ENCODE measurements at regions of chr2 and their contacts with region 1.

Region 1: DNA sequence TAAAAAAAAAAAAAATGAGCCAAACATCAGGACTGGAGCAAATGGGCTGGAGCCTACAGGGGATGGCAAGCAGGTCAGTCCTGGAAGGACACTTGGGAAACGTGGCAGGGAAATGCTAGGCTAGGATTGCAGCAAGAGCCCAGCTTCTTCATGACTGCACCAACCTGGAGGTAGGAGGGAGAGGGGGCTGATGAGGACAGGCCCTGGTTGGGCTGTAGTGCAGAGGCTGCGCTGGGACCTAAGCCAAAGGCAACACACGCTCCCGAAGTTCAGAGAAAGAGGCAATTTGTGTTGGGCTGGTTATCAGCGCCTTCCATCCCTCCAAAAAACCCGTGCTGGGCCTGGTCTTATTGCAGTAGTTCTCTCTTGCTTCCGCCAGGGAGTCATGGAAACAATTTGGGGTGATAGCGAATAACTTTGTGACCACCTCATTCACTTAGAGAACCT is 82.3 kb upstream of the STPG4 start:
- DNase-seq: no peak
- ATAC-seq: peak; percentile 7
- H3K4me3 Mint-ChIP-seq: no peak overlapping the region
- H3K27ac Mint-ChIP-seq: peak overlapping the region; percentile 28; the same call in 1 of the 2 replicates
- H3K4me1 Mint-ChIP-seq: peaks cover 48% of the 10 kb centered on the region
- H3K27me3 Mint-ChIP-seq: peaks cover 5% of the 10 kb centered on the region; the same call in 1 of the 2 replicates
- CTCF ChIP-seq: no peak

Region 2: GRCh38 chr2:47265751-47266231 is 28.4 kb after region 1 on chr2:
- CTCF ChIA-PET with region 1: interaction called, 12 read pairs
- POLR2A ChIA-PET with region 1: no interaction called
- DNase-seq: no peak
- ATAC-seq: peak; percentile 8
- H3K4me3 Mint-ChIP-seq: no peak overlapping the region
- H3K27ac Mint-ChIP-seq: peak overlapping the region; percentile 6; the same call in 1 of the 2 replicates
- H3K4me1 Mint-ChIP-seq: peaks cover 39% of the 10 kb centered on the region
- H3K27me3 Mint-ChIP-seq: no peaks in the 10 kb centered on the region
- CTCF ChIP-seq: no peak

Region 3: DNA sequence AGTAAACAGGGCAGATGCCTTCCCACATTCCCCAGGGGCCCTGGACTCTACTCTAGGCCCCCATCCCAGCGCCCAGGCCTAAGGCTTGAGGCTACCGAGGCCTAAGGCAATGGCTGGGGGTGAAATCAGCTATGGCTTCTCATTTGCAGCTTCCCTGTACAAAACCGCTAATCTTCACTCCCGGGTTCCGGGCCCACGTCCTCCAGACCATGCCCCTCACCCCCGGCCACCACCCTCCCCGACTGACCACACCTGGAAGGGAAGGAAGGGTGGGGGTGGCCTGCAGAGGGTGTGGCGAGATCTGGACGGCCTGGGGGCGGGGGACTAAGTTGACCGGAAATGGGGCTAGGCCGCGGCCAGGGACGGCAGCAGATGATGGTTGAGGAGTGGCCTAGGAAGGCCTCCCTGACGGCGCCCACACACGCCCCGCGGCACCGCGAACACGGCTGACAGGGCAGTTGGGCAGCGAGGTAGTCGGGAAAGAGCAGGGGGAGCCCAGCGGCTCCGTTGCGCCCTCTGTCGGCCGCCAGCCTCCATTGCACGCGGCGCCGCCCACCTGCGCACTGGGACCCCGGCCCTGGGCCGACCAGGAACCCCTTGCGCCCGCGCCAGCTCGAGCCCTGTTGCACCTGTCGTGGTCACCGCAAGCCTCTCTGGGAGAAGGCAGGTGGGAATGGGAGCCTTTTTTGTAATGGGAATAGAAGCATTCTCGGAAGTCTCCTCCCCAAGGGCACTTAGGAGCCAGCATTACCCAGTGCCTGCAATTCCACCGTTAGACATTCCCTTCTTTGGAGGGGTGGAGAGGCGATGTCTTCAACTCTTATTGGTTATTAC is 34.9 kb after region 1 on chr2:
- CTCF ChIA-PET with region 1: interaction called, 14 read pairs
- POLR2A ChIA-PET with region 1: no interaction called
- DNase-seq: peak; percentile 85
- ATAC-seq: peak; percentile 91
- H3K4me3 Mint-ChIP-seq: peak overlapping the region; percentile 68
- H3K27ac Mint-ChIP-seq: no peak overlapping the region
- H3K4me1 Mint-ChIP-seq: peaks cover 51% of the 10 kb centered on the region
- H3K27me3 Mint-ChIP-seq: no peaks in the 10 kb centered on the region
- CTCF ChIP-seq: peak; percentile 99

Region 4: GRCh38 chr2:47323009-47323821 is 85.8 kb after region 1 on chr2:
- CTCF ChIA-PET with region 1: no interaction called
- POLR2A ChIA-PET with region 1: no interaction called
- DNase-seq: peak; percentile 85
- ATAC-seq: peak; percentile 93
- H3K4me3 Mint-ChIP-seq: no peak overlapping the region
- H3K27ac Mint-ChIP-seq: no peak overlapping the region
- H3K4me1 Mint-ChIP-seq: peaks cover 17% of the 10 kb centered on the region
- H3K27me3 Mint-ChIP-seq: no peaks in the 10 kb centered on the region
- CTCF ChIP-seq: peak; percentile 96

Region 5: DNA sequence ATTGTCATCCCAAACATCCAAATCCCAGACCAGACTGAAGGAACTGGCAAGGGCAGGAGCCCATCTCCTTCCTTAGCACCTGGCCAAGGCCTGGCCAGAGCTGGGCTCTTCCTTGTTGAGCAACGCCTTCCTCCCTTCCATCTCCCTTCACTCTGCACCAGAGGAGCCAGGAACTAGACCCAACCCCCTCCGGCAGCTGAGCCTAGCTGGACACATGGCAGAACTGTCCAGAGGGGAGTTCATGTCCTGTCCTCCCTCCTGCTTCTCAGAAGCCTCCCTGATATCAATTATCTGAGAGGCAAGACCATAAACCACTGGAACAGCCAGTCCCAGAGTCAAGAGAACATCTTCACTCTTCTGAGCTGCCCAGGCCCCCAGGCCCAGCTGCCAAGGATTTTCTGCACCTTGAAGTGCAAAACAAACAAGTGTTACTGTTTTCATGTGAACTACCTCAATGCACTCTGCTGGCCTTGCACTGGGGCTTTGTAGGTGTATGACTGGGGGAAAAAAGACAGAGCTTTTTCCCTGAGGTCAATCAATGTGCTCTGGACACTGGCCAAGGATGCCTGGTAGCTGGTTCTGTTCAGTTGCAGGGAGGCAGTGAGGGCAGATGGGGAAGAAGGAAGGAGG is 437.9 kb after region 1 on chr2:
- CTCF ChIA-PET with region 1: no interaction called
- POLR2A ChIA-PET with region 1: no interaction called
- DNase-seq: no peak
- ATAC-seq: no peak
- H3K4me3 Mint-ChIP-seq: no peak overlapping the region
- H3K27ac Mint-ChIP-seq: no peak overlapping the region
- H3K4me1 Mint-ChIP-seq: peaks cover 19% of the 10 kb centered on the region
- H3K27me3 Mint-ChIP-seq: 0 out of 2 replicates have a peak, but pooled peaks cover 3% of the 10 kb centered on the region
- CTCF ChIP-seq: no peak

Measured in WTC11 (cell line).